Activated CD4-positive, alpha-beta memory T cell treated with anti-CD3 and anti-CD28 coated beads for 36 hours (primary cell): ENCODE measurements at regions of chr11 and their contacts with region 1.

Region 1: GRCh38 chr11:36265793-36266628 is 23.2 kb downstream of the COMMD9 start:
- DNase-seq: peak; percentile 72
- H3K4me3 Mint-ChIP-seq: no peak overlapping the region
- H3K27ac Mint-ChIP-seq: no peak overlapping the region
- H3K4me1 Mint-ChIP-seq: no peaks in the 10 kb centered on the region
- H3K27me3 Mint-ChIP-seq: peaks cover 11% of the 10 kb centered on the region

Region 2: DNA sequence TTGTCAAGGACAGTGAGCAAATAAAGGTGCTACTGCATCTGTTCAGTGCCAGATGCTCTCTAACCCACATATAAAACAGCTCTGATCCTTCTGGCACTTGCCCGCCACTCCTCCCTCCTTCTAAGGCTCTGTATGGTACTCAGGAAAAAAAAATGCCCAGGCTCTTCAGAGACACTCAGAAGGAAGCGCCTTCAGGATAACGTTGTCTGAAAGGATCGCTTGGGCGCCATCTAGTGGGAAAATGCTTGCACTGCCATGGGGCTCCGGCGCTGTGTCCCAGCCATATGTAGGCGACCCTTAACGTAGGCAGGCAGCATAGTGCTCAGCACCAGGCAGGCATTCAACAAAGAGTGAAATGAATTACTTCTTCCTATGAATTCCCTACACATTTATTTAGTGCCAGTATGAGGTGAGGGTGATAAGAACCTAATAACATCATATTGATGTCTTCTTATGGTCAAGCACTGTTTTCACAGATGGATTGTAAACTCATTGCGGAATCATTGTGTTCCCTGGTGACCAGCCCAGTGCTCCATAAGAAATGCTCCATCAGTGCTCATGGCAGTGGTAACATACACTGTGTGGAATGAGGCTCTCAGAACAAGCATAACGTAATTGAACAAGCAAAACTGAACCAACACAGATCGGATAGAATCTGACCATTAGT is 780.2 kb before region 1 on chr11:
- CTCF ChIA-PET with region 1: interaction called, 7 read pairs
- POLR2A ChIA-PET with region 1: no interaction called
- intact Hi-C with region 1: loop called (anchors 5 kb)
- DNase-seq: peak; percentile 81
- H3K4me3 Mint-ChIP-seq: no peak overlapping the region
- H3K27ac Mint-ChIP-seq: no peak overlapping the region
- H3K4me1 Mint-ChIP-seq: no peaks in the 10 kb centered on the region
- H3K27me3 Mint-ChIP-seq: peaks cover 40% of the 10 kb centered on the region

Region 3: GRCh38 chr11:36041988-36042611 is 223.9 kb before region 1 on chr11:
- CTCF ChIA-PET with region 1: interaction called, 24 read pairs
- POLR2A ChIA-PET with region 1: no interaction called
- intact Hi-C with region 1: no loop called
- DNase-seq: no peak
- H3K4me3 Mint-ChIP-seq: no peak overlapping the region
- H3K27ac Mint-ChIP-seq: no peak overlapping the region
- H3K4me1 Mint-ChIP-seq: no peaks in the 10 kb centered on the region
- H3K27me3 Mint-ChIP-seq: no peaks in the 10 kb centered on the region

Region 4: DNA sequence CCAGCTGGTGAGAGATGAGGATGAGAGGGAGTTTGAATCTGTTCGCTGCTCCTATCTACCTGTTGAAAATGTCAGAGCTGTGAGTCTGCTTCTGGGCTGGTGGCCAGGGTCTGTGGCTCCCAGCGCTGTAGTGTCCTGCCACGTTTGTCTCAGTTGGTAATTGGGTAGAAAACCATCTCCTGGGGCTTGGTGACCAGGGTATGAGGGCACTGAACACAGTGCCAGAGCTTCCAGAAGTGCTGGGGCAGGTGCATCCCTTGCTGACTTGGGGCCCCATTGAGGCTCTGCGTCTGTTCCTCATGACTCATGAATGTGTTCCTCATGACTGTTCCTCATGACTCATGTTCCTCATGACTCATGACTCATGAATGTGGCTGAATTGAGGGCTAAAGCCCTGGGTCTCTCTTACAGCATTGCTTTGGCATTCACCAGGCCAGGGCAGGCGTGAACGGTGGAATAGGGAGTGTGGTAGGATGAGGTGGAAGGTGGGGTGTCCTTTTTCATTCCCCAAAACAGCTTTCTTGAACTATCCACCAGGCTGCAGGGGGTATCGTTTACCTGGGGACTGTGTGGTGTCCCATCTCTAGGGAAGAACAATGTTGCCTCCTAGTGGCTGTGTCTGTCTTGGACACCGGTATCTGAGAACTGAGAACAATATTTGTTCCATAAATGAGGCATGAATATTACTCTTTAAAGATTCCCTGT is 116.3 kb before region 1 on chr11:
- CTCF ChIA-PET with region 1: no interaction called
- POLR2A ChIA-PET with region 1: no interaction called
- intact Hi-C with region 1: no loop called
- DNase-seq: peak; percentile 66
- H3K4me3 Mint-ChIP-seq: no peak overlapping the region
- H3K27ac Mint-ChIP-seq: no peak overlapping the region
- H3K4me1 Mint-ChIP-seq: peaks cover 10% of the 10 kb centered on the region
- H3K27me3 Mint-ChIP-seq: peaks cover 6% of the 10 kb centered on the region

Region 5: DNA sequence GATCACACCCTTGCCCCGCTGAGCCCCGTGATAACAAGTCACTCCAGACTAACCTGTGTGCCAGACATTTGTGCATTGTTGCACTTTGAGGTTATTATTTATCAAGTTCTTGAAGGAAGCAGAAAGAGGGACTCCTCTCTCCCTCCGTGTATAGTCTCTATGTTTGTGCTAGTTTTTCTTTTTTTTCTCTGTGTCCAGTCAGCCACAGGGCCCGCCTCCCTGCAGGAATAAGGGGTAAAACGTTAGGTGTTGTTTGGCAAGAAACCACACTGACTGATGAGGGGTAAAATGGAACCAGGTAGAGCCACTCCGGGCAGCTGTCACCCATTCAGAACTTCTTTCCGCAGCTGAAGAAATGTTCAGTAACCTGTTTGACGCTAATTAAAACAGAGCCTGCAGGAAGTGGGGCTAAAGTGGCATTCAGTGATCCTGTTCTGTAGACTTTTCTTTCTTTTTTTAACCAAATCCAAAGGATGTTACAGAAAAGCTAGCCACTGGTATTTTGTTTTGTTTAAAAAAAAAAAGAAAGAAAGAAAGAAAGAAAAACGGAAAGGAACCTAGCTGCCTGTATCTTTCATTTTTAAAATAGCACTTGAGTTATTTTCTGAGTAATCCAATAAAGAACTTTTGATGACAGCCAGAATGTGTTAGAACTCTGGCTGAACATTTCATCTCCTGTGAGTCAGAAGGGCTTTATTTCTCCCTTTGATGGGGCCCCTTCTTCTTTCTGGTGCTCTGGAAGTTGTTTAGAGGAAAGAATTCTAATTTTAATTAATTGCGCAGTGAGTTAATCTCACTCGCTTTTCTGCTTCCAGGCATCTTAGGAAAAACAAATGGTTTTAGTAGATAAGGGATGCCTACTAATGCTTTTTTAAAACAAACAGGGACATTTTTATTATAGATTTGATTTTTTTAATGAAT is 35.0 kb before region 1 on chr11:
- CTCF ChIA-PET with region 1: no interaction called
- POLR2A ChIA-PET with region 1: no interaction called
- intact Hi-C with region 1: no loop called
- DNase-seq: no peak
- H3K4me3 Mint-ChIP-seq: no peak overlapping the region
- H3K27ac Mint-ChIP-seq: no peak overlapping the region
- H3K4me1 Mint-ChIP-seq: no peaks in the 10 kb centered on the region
- H3K27me3 Mint-ChIP-seq: peaks cover 6% of the 10 kb centered on the region

Region 6: GRCh38 chr11:36249246-36249645 is 16.8 kb before region 1 on chr11:
- CTCF ChIA-PET with region 1: interaction called, 16 read pairs
- POLR2A ChIA-PET with region 1: no interaction called
- intact Hi-C with region 1: no loop called
- DNase-seq: no peak
- H3K4me3 Mint-ChIP-seq: no peak overlapping the region
- H3K27ac Mint-ChIP-seq: no peak overlapping the region
- H3K4me1 Mint-ChIP-seq: no peaks in the 10 kb centered on the region
- H3K27me3 Mint-ChIP-seq: peaks cover 28% of the 10 kb centered on the region

Region 7: GRCh38 chr11:36278531-36279282 is 12.7 kb after region 1 on chr11:
- CTCF ChIA-PET with region 1: interaction called, 27 read pairs
- POLR2A ChIA-PET with region 1: no interaction called
- intact Hi-C with region 1: no loop called
- DNase-seq: no peak
- H3K4me3 Mint-ChIP-seq: no peak overlapping the region
- H3K27ac Mint-ChIP-seq: no peak overlapping the region
- H3K4me1 Mint-ChIP-seq: peaks cover 2% of the 10 kb centered on the region
- H3K27me3 Mint-ChIP-seq: no peaks in the 10 kb centered on the region